B cell (primary cell): ENCODE measurements at regions of chr9 and their contacts with region 1.

Region 1: DNA sequence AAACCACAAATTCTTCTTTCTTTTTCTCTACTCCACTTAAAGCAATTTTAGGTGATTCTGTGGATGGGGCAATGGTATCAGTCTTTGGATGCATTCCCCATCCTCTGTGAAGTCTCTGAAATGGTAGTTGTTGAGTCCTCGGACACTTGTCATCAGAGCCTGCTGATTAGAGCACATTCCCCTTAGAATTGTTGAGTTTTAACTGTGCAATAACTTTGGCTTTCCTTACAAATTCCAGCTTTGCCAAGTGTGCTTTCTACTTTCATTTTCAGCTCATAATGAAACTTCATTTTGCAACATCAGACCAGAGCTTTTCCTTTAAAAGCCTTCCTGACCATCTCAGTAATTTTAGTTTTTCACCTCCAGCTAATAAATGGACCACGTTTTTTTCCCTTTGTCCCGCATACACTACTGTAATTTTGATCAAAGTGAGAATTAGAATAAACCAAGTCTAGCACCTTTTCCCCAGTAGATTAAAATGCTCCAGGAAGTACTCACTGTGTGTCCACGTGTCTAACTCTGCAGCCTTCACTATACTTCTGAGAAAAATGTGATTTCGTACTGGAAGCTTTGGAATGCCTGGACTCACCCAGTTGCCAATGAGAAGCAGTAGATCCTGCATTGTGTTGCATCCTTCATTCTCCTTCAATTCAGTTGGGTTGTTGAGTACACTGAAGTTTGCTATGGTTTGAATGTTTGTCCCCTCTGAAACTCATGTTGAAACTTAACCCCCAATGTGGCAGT is 135.6 kb downstream of the NTRK2 start:
- DNase-seq: no peak
- ATAC-seq: no peak
- H3K4me3 ChIP-seq: no peak overlapping the region
- H3K4me3 Mint-ChIP-seq: no peak overlapping the region
- H3K27ac ChIP-seq: no peak overlapping the region
- H3K27ac Mint-ChIP-seq: no peak overlapping the region
- H3K4me1 ChIP-seq: no peaks in the 10 kb centered on the region
- H3K4me1 Mint-ChIP-seq: no peaks in the 10 kb centered on the region
- H3K27me3 ChIP-seq: no peaks in the 10 kb centered on the region
- H3K27me3 Mint-ChIP-seq: peaks cover 4% of the 10 kb centered on the region
- CTCF ChIP-seq: no peak

Region 2: GRCh38 chr9:84761137-84761810 is 43.8 kb before region 1 on chr9:
- CTCF ChIA-PET with region 1: no interaction called
- POLR2A ChIA-PET with region 1: no interaction called
- intact Hi-C with region 1: no loop called
- DNase-seq: no peak
- ATAC-seq: no peak
- H3K4me3 ChIP-seq: no peak overlapping the region
- H3K4me3 Mint-ChIP-seq: no peak overlapping the region
- H3K27ac ChIP-seq: no peak overlapping the region
- H3K27ac Mint-ChIP-seq: no peak overlapping the region
- H3K4me1 ChIP-seq: no peaks in the 10 kb centered on the region
- H3K4me1 Mint-ChIP-seq: no peaks in the 10 kb centered on the region
- H3K27me3 ChIP-seq: no peaks in the 10 kb centered on the region
- H3K27me3 Mint-ChIP-seq: no peaks in the 10 kb centered on the region
- CTCF ChIP-seq: no peak

Region 3: DNA sequence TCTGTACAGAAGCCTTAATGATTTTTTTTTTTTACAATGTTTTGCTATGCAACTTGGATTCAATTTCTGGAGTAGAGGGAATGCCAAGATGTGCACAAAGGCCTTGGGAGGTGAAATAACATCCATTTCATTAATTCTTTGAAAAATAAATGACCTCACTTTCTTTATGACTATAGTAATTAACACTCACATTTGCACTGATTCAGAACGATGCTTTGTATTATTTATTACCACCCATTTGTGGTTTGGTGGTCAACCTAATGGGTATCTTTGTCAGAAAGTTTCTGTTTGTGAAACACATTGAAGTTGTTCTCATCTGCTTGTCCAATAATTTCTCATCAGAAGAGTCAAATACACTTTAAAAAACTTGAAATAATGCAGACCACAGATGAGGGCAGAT is 33.8 kb after region 1 on chr9:
- CTCF ChIA-PET with region 1: no interaction called
- POLR2A ChIA-PET with region 1: no interaction called
- intact Hi-C with region 1: loop called (anchors 1 kb)
- DNase-seq: no peak
- ATAC-seq: no peak
- H3K4me3 ChIP-seq: no peak overlapping the region
- H3K4me3 Mint-ChIP-seq: no peak overlapping the region
- H3K27ac ChIP-seq: no peak overlapping the region
- H3K27ac Mint-ChIP-seq: no peak overlapping the region
- H3K4me1 ChIP-seq: no peaks in the 10 kb centered on the region
- H3K4me1 Mint-ChIP-seq: peaks cover under 1% of the 10 kb centered on the region
- H3K27me3 ChIP-seq: no peaks in the 10 kb centered on the region
- H3K27me3 Mint-ChIP-seq: no peaks in the 10 kb centered on the region
- CTCF ChIP-seq: no peak